Activated CD4-positive, alpha-beta memory T cell treated with anti-CD3 and anti-CD28 coated beads, Interleukin-2, amount 10 ng/mL, durations not matched to agents 7 days and 5 days (primary cell): ENCODE measurements at regions of chr18 and their contacts with region 1.

Region 1: GRCh38 chr18:76932026-76932819 is 109.9 kb downstream of the ZNF236 start:
- DNase-seq: no peak
- H3K4me3 Mint-ChIP-seq: no peak overlapping the region
- H3K27ac Mint-ChIP-seq: peak overlapping the region; percentile 12
- H3K4me1 Mint-ChIP-seq: peaks cover 21% of the 10 kb centered on the region
- H3K27me3 Mint-ChIP-seq: no peaks in the 10 kb centered on the region

Region 2: GRCh38 chr18:76838182-76838581 is 94.0 kb before region 1 on chr18:
- CTCF ChIA-PET with region 1: no interaction called
- POLR2A ChIA-PET with region 1: no interaction called
- DNase-seq: no peak
- H3K4me3 Mint-ChIP-seq: no peak overlapping the region
- H3K27ac Mint-ChIP-seq: no peak overlapping the region
- H3K4me1 Mint-ChIP-seq: peaks cover 11% of the 10 kb centered on the region
- H3K27me3 Mint-ChIP-seq: no peaks in the 10 kb centered on the region

Region 3: GRCh38 chr18:76922107-76922506 is 10.1 kb before region 1 on chr18:
- CTCF ChIA-PET with region 1: interaction called, 13 read pairs
- POLR2A ChIA-PET with region 1: no interaction called
- DNase-seq: peak; percentile 62
- H3K4me3 Mint-ChIP-seq: no peak overlapping the region
- H3K27ac Mint-ChIP-seq: no peak overlapping the region
- H3K4me1 Mint-ChIP-seq: peaks cover 15% of the 10 kb centered on the region
- H3K27me3 Mint-ChIP-seq: no peaks in the 10 kb centered on the region